ENCODE measurements at regions of chr11 and their contacts with region 1.

Region 1: DNA sequence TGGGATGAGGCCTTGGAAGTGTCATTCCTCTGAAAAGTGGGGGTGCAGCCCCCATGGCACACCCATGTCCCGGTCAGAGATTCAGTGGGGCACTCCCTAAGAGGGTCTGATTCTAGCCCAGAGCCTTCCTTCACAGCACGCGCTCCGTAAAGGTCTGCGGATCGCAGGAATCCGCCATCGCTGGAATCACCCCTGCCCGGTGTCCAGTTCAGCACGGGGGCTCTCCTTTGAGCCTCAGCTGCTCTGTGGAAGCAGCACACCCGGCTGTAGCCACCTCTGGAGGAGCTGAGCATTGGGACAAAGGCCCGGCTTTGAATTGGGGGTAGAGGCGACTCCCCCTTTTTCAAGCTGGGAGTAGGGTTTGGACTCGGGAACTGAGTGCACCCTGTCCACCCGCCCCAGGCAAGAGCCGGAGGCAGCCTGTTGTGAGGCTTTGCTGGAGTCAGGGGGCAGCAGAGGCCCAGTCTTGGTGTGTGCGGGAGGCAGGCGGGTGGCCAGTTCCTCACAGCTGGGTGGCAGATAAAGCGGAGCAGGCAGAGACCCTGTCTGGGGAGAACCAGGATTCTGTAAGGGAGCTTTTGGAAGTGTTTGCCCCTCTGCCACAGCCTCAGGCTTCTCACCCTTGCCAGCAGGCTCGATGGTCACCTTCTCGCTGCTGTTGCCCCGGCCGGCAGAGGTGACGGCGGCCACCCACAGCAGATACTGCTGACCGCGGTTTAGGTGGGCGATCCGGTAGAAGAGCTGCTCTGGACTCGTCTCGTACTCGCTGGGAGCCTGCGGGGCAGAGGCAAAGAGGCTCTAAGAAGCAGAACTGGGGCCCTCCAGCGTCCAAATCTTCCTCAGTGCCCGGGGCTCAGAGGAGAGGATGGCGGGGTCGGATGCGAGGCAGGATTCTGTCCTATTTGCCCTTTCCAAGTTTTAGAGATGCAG is 115.9 kb downstream of the CEP164 start:
- DNase-seq: no peak
- ATAC-seq: peak; percentile 83

Region 2: DNA sequence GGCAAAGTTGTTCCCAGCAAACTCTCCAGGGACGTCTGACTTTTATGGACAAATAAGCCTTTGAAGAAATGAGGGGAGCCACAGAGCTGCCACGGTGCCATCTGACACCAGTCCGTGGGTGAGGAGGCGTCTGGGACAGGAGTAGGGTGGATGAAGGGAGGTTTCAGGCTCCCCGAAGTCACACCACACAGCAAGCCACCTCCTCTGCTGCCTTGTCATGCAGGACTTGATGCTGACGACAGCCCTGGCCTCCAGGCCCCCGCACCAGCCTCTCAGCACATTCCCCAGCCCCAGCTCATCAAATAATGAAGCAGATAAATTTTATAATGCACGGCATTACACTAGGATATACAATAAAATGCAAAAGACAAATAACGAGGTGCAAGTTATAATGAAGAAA is 40.6 kb after region 1 on chr11:
- intact Hi-C with region 1: no loop called
- DNase-seq: no peak
- ATAC-seq: no peak

Region 3: GRCh38 chr11:117807482-117808327 is 364.2 kb after region 1 on chr11:
- intact Hi-C with region 1: loop called (anchors 2 kb)
- DNase-seq: peak; percentile 91
- ATAC-seq: peak; percentile 54